Activated naive CD4-positive, alpha-beta T cell treated with anti-CD3 and anti-CD28 coated beads for 36 hours (primary cell): ENCODE measurements at regions of chr4 and their contacts with region 1.

Region 1: GRCh38 chr4:86977621-86978184 is 42.9 kb downstream of the AFF1 start:
- DNase-seq: no peak
- H3K4me3 Mint-ChIP-seq: no peak overlapping the region
- H3K27ac Mint-ChIP-seq: no peak overlapping the region
- H3K4me1 Mint-ChIP-seq: peaks cover 54% of the 10 kb centered on the region
- H3K27me3 Mint-ChIP-seq: no peaks in the 10 kb centered on the region

Region 2: GRCh38 chr4:86961605-86962295 is 16.0 kb before region 1 on chr4:
- CTCF ChIA-PET with region 1: no interaction called
- intact Hi-C with region 1: loop called (anchors 2 kb)
- DNase-seq: peak; percentile 48
- H3K4me3 Mint-ChIP-seq: no peak overlapping the region
- H3K27ac Mint-ChIP-seq: no peak overlapping the region
- H3K4me1 Mint-ChIP-seq: peaks cover 40% of the 10 kb centered on the region
- H3K27me3 Mint-ChIP-seq: no peaks in the 10 kb centered on the region

Region 3: GRCh38 chr4:86991994-86992393 is 14.3 kb after region 1 on chr4:
- CTCF ChIA-PET with region 1: no interaction called
- intact Hi-C with region 1: no loop called
- DNase-seq: no peak
- H3K4me3 Mint-ChIP-seq: no peak overlapping the region
- H3K27ac Mint-ChIP-seq: no peak overlapping the region
- H3K4me1 Mint-ChIP-seq: no peaks in the 10 kb centered on the region
- H3K27me3 Mint-ChIP-seq: no peaks in the 10 kb centered on the region